PC-9 (cell line): ENCODE measurements at regions of chr3 and their contacts with region 1.

Region 1: GRCh38 chr3:50350527-50351322 is at the starts of genes CYB561D2 and NPRL2:
- DNase-seq: peak; percentile 89 to 98
- H3K4me3 ChIP-seq: peak within 1 kb of the TSS; percentile 79
- H3K27ac ChIP-seq: 0 out of 2 replicates have a peak within 1 kb of the TSS, but pooled peaks have one; percentile 45
- H3K4me1 ChIP-seq: peaks cover 17% of the 10 kb centered on the region; the same call in 1 of the 2 replicates
- H3K27me3 ChIP-seq: no peaks in the 10 kb centered on the region
- CTCF ChIP-seq: no peak
- total RNA-seq, gene CYB561D2: 15.7 and 19.3 TPM in 2 replicates
- total RNA-seq, gene NPRL2: 24.1 and 25.4 TPM in 2 replicates

Region 2: DNA sequence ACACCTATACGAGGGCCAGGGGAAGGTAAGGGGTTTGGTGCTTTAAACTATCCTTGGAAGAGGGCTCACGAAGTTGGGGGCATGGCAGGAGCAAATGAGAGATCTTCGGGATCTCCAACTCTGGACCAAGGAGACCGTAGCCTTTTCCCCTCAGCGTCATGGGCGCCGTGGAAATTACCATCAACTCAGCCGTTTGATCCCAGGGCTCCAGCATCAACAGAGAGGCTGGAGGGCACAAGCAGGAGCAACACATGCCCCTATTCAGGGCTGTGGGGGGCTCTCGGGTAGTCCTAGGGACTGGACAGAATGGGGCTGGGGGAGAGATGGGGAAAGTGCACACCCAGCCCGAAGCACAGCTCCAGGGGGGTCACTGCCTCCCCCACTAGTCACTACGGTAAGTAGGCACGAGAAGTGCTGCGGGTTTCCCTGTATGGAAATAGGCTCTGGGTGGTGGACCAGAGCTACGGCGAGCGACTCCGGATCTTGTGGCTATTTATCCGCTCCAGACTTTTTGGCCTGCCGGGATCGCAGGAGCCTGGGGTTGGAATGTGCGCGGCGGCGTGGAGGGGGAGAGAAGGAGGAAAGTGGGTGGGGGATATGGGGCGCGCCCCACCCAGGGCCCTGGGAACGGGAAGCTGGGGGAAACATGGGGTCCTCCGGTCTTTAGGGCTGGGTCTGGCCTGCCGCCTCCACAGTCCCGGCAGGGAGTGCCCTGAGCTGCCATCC is 1217.3 kb before region 1 on chr3:
- CTCF ChIA-PET with region 1: no interaction called
- POLR2A ChIA-PET with region 1: interaction called, 14 read pairs
- intact Hi-C with region 1: no loop called
- DNase-seq: peak; percentile 71 to 85
- H3K4me3 ChIP-seq: peak overlapping the region; percentile 78
- H3K27ac ChIP-seq: peak overlapping the region; percentile 92
- H3K4me1 ChIP-seq: peaks cover 19% of the 10 kb centered on the region
- H3K27me3 ChIP-seq: no peaks in the 10 kb centered on the region
- CTCF ChIP-seq: no peak

Region 3: GRCh38 chr3:49882166-49882565 is 468.6 kb before region 1 on chr3:
- CTCF ChIA-PET with region 1: no interaction called
- POLR2A ChIA-PET with region 1: no interaction called
- intact Hi-C with region 1: no loop called
- DNase-seq: no peak
- H3K4me3 ChIP-seq: no peak overlapping the region
- H3K27ac ChIP-seq: no peak overlapping the region
- H3K4me1 ChIP-seq: no peaks in the 10 kb centered on the region
- H3K27me3 ChIP-seq: no peaks in the 10 kb centered on the region
- CTCF ChIP-seq: no peak

Region 4: DNA sequence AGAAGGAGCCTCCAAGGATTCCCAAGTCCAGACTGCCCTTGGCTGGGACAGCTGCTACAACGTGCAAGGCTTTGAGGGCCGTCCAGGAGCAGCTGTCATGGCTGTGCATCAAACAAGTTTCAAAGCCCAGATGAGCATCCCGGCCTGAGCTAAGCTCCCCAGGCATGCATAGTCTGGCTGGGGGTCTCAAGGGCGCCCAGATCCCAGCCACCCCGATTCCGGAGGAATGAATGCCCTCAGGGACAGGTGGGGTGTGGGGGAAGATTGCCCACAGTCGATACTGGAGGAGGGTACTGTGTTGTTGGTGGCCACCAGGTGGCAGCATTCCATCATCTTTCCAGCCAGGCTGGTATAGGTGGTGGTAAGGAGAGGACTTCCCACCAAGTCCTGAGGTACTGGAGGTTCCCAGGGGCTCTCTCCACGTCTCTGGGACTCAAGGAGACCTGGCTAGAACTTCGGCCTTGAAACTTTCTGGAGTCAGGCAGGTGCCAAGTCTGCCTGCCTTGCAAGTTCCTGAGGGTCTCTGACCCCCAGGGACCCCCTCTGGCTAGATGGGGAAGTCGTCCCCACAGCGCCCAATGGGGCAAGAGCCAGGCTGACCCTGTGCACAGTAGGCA is 229.2 kb before region 1 on chr3:
- CTCF ChIA-PET with region 1: interaction called, 14 read pairs
- POLR2A ChIA-PET with region 1: no interaction called
- intact Hi-C with region 1: no loop called
- DNase-seq: peak; percentile 63 to 76
- H3K4me3 ChIP-seq: no peak overlapping the region
- H3K27ac ChIP-seq: no peak overlapping the region
- H3K4me1 ChIP-seq: 0 out of 2 replicates have a peak, but pooled peaks cover 4% of the 10 kb centered on the region
- H3K27me3 ChIP-seq: no peaks in the 10 kb centered on the region
- CTCF ChIP-seq: peak; percentile 87

Region 5: DNA sequence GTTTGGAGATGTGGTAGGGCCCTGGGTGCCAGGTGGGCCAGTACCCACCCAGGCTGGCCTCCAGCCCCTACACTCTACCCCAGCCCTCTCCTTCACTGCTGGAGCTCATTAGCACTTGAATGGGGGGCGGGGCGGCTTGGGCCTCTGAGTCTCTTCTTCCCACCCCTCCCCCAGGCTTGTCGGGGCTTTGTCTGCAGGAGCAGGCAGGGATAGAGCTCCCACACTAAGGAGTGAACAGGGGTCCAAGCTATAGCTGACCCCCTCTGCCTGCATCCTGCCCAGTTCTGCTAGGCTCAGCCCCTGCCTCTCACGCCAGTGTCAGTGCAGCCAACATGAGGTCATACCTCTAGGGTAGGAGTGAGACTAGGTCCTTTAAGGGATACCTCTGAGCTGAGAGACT is 109.6 kb before region 1 on chr3:
- CTCF ChIA-PET with region 1: no interaction called
- POLR2A ChIA-PET with region 1: no interaction called
- intact Hi-C with region 1: no loop called
- DNase-seq: no peak
- H3K4me3 ChIP-seq: no peak overlapping the region
- H3K27ac ChIP-seq: no peak overlapping the region
- H3K4me1 ChIP-seq: peaks cover 23% of the 10 kb centered on the region
- H3K27me3 ChIP-seq: no peaks in the 10 kb centered on the region
- CTCF ChIP-seq: no peak

Region 6: DNA sequence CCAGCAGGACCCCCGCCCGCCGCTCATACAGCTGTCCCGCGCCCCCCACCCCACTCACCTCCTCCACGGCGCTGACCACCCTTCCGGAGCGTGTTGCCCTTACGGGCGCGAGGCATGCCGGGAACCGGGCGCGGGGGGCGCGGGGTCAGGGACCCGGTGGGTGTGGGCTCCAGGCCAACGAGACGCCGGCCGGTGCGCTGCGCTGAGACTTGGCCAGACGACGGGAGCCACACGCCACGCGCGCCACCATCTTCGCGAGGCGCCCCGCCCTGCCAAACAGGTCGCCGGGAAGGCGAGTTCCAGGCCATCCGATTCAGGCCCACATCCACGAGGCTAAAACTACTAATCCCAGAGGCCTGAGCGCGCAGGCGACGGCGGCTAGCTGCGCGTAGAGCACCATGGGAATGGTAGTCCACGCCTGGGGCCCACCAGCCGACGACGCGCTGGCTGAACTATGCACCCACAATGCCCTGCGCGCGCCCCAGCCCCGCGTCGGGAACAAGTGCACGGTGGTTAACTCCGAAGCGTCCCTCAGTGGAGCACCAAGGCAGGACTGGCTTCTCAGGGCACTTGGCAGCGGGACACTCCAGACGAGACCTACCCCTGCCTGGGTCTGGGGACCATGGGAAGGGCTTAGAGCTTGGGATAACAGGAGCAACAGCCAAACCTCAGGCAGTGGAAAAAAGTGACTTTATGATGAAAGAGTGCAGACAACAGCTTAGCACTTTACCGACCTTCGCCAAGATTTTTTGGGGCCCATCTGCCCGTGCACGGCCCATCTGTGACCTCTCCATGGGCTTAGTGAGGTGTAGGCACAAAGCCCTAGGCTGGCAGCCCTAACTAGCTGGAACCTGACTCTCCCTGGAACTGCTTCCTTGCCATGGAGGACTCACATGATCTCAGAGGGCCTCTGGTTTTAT is 58.3 kb before region 1 on chr3 and contains the start of gene IFRD2:
- CTCF ChIA-PET with region 1: no interaction called
- POLR2A ChIA-PET with region 1: no interaction called
- intact Hi-C with region 1: no loop called
- DNase-seq: peak; percentile 90 to 95
- H3K4me3 ChIP-seq: peak within 1 kb of the TSS; percentile 79
- H3K27ac ChIP-seq: peak within 1 kb of the TSS; percentile 74
- H3K4me1 ChIP-seq: peaks cover 13% of the 10 kb centered on the region
- H3K27me3 ChIP-seq: no peaks in the 10 kb centered on the region
- CTCF ChIP-seq: no peak
- total RNA-seq, gene IFRD2: 93.1 and 118 TPM in 2 replicates

Region 7: DNA sequence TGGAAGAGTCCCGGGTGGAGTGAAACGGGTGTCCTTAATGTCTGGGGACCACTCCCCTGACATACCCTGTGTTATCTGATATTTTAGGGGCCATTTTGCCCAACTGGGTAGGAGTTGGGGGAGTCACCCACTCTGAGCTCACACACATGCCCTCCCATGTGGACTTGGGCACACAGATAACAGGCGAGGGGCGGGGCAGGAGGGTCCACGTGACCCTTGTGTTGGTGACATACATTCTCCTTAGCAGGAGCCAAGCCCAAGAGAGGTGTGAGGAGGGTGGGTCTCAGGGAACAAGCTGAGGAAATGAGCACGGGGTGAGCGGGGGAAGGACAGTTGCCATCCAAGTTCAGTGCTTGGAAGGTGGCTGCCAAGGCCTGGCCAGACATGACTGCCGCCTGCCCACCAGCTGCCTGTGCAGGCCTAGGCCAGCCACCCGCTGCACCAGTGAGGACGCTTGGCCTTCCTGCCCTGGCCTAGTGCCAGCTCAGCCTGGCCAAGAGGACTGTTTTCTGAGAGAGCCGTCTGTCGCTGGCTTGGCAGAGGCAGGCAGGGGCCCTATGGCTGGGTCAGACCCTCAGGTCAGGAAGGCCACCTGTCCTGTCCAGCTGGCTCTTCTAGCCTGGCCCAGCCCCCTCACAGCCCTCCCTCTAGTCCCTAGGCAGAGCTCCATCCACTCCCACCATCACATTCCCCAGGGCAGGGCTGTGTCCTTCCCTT is 39.9 kb after region 1 on chr3:
- CTCF ChIA-PET with region 1: interaction called, 11 read pairs
- POLR2A ChIA-PET with region 1: no interaction called
- intact Hi-C with region 1: no loop called
- DNase-seq: peak in 1 of 2 experiments; percentile 46
- H3K4me3 ChIP-seq: no peak overlapping the region
- H3K27ac ChIP-seq: no peak overlapping the region
- H3K4me1 ChIP-seq: peaks cover 8% of the 10 kb centered on the region
- H3K27me3 ChIP-seq: no peaks in the 10 kb centered on the region
- CTCF ChIP-seq: no peak

Region 8: GRCh38 chr3:50427984-50428633 is 77.4 kb after region 1 on chr3:
- CTCF ChIA-PET with region 1: no interaction called
- POLR2A ChIA-PET with region 1: interaction called, 3 read pairs
- intact Hi-C with region 1: loop called (anchors 1 kb)
- DNase-seq: peak; percentile 43 to 52
- H3K4me3 ChIP-seq: no peak overlapping the region
- H3K27ac ChIP-seq: no peak overlapping the region
- H3K4me1 ChIP-seq: no peaks in the 10 kb centered on the region
- H3K27me3 ChIP-seq: peaks cover 8% of the 10 kb centered on the region; the same call in 1 of the 2 replicates
- CTCF ChIP-seq: peak; percentile 55; the same call in 1 of the 2 replicates

Region 9: GRCh38 chr3:50550079-50550741 is 199.5 kb after region 1 on chr3:
- CTCF ChIA-PET with region 1: no interaction called
- POLR2A ChIA-PET with region 1: no interaction called
- intact Hi-C with region 1: loop called (anchors 1 kb)
- DNase-seq: peak in 1 of 2 experiments; percentile 63
- H3K4me3 ChIP-seq: no peak overlapping the region
- H3K27ac ChIP-seq: no peak overlapping the region
- H3K4me1 ChIP-seq: no peaks in the 10 kb centered on the region
- H3K27me3 ChIP-seq: no peaks in the 10 kb centered on the region
- CTCF ChIP-seq: peak; percentile 72

Region 10: DNA sequence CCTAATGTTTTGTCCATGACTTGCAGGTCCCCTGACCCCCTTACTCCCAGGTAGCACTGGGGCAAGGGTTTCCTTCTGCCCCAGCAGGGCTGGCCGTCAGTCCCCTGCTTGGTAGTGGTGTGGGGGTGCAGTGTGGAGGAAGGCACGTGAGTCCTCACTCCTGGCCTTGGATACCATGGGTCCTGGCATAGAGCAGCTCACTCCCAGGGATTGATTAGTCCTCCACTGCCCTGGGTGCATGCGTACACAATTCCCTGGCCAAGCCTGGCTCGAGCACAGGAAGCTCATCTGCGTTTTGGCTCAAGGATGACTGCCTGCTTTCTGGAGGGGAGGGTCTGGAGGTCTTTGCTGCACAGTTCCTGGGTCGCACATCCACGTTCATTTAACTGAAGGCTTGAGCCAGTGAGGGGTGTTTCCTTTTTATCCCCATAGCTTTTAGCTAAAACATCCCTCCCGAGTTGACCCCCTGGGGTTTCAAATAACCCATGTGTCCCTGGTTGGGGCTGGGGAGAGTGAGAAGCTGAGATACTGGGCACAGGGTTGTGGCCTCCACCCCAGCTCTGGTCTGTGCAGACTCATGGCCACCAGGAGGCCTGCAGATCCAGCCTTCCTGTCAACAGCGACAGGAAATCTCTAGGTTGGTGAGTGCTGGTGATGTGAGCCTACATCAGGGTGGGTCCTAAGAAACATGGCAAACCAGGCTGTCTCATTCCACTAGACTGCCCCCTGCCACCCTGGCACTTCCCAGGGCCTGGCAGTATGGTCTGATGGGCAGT is 230.1 kb after region 1 on chr3:
- CTCF ChIA-PET with region 1: no interaction called
- POLR2A ChIA-PET with region 1: no interaction called
- intact Hi-C with region 1: no loop called
- DNase-seq: peak in 1 of 2 experiments; percentile 21
- H3K4me3 ChIP-seq: no peak overlapping the region
- H3K27ac ChIP-seq: no peak overlapping the region
- H3K4me1 ChIP-seq: no peaks in the 10 kb centered on the region
- H3K27me3 ChIP-seq: no peaks in the 10 kb centered on the region
- CTCF ChIP-seq: no peak